ENCODE measurements at regions of chr2 and their contacts with region 1.

Region 1: GRCh38 chr2:85750587-85751575 is 2.9 kb upstream of the ATOH8 start:
- DNase-seq: peak; percentile 47
- H3K4me3 Mint-ChIP-seq: no peak overlapping the region
- H3K27ac Mint-ChIP-seq: no peak overlapping the region
- H3K4me1 Mint-ChIP-seq: peaks cover 13% of the 10 kb centered on the region
- H3K27me3 Mint-ChIP-seq: peaks cover 52% of the 10 kb centered on the region

Region 2: GRCh38 chr2:85684806-85685205 is 66.1 kb before region 1 on chr2:
- intact Hi-C with region 1: no loop called
- DNase-seq: no peak
- H3K4me3 Mint-ChIP-seq: no peak overlapping the region
- H3K27ac Mint-ChIP-seq: no peak overlapping the region
- H3K4me1 Mint-ChIP-seq: peaks cover 23% of the 10 kb centered on the region
- H3K27me3 Mint-ChIP-seq: peaks cover 10% of the 10 kb centered on the region

Region 3: DNA sequence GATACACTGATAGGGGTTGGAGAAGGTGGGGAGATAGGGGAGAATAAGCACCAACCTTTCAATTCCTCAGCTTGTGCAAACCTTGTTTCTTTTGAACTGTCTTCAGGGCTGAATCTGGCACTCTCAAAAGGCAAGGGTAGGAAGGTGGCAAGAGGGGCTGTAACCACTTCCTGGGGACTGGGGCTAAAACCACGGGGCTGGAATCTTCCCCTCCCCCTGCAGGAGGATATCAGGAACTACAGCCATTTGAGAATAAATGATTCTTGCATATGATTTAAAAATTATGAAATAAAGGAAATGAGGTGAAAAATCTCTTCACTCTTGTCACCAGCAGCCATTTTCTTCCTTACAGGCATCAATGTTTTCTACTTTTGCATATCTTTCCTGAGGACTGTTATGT is 53.7 kb after region 1 on chr2:
- intact Hi-C with region 1: loop called (anchors 1 kb)
- DNase-seq: peak; percentile 10
- H3K4me3 Mint-ChIP-seq: no peak overlapping the region
- H3K27ac Mint-ChIP-seq: no peak overlapping the region
- H3K4me1 Mint-ChIP-seq: peaks cover 13% of the 10 kb centered on the region
- H3K27me3 Mint-ChIP-seq: peaks cover 15% of the 10 kb centered on the region

Region 4: DNA sequence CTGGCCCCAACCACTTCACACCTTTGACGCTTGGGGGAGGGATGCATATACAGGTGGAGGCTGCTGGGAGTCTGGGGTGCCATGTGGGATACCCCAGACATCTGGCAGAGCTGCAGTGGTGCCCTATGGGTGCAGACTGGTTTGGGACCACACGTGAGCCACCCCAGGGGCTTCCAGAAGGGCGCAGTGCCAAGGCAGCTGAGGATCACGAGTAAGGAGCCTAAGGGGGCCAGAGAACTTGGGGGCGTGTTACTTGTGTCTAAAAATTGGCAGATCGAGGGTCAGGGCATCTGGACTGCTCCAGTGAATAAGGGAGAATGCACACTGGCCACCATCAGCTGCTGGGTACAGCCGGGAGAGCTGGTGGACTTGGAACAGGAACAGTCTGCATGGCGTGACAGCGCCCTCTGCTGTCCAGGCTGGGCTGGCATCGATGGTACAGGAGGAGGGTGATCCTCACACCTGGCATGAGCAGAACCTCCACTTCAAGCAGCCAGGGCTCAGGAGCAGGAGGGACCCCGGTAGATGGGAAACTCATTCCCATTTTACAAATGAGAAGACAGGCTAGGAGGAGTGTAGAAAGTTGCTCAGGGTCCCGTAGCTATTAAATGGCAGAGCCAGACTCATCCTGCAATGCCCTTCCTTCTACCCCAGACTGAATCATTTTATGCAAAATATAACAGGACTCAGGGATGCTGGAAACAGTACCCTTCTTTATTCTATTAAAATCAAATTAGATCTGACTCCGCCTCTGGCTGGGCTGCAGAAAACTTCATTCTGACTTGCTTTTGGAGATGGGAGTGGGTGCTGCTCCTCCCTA is 63.3 kb after region 1 on chr2:
- intact Hi-C with region 1: loop called (anchors 1 kb)
- DNase-seq: peak; percentile 74
- H3K4me3 Mint-ChIP-seq: no peak overlapping the region
- H3K27ac Mint-ChIP-seq: no peak overlapping the region
- H3K4me1 Mint-ChIP-seq: peaks cover 8% of the 10 kb centered on the region
- H3K27me3 Mint-ChIP-seq: peaks cover 35% of the 10 kb centered on the region

Region 5: DNA sequence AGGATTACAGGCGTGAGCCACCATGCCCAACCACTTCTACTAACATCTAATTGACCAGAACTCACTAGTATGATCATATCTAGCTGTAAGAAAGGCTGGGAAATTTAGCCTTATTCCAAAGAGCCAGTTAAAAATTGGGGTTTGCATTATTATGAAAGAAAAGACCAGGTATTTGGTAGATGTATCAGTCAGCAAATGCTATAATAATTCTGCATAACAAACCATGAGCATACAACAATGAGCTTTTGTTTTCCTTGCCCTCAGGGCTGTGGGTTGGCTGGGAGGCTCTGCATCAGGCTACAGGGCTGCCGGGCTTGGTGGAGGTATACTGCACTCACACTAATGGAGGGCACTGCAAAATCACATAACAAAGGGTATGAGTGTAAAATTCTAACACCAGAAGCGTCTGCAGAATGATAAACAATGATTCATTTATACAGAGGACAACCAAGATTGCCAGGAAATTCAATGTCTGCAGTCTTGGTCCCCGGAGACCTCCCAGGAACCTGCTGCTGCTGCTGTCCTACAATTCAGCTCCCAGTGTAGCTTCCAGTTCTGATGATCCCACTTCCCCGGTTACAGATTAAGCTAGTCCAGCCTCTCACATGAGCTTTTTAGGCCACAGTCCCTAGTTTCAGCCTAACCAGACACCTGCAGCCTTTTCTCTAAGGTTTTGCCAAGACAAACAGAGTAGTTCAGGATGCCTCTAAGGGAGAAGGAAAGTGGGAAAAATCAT is 170.1 kb after region 1 on chr2:
- intact Hi-C with region 1: no loop called
- DNase-seq: no peak
- H3K4me3 Mint-ChIP-seq: no peak overlapping the region
- H3K27ac Mint-ChIP-seq: no peak overlapping the region
- H3K4me1 Mint-ChIP-seq: peaks cover 17% of the 10 kb centered on the region
- H3K27me3 Mint-ChIP-seq: peaks cover 7% of the 10 kb centered on the region

Region 6: DNA sequence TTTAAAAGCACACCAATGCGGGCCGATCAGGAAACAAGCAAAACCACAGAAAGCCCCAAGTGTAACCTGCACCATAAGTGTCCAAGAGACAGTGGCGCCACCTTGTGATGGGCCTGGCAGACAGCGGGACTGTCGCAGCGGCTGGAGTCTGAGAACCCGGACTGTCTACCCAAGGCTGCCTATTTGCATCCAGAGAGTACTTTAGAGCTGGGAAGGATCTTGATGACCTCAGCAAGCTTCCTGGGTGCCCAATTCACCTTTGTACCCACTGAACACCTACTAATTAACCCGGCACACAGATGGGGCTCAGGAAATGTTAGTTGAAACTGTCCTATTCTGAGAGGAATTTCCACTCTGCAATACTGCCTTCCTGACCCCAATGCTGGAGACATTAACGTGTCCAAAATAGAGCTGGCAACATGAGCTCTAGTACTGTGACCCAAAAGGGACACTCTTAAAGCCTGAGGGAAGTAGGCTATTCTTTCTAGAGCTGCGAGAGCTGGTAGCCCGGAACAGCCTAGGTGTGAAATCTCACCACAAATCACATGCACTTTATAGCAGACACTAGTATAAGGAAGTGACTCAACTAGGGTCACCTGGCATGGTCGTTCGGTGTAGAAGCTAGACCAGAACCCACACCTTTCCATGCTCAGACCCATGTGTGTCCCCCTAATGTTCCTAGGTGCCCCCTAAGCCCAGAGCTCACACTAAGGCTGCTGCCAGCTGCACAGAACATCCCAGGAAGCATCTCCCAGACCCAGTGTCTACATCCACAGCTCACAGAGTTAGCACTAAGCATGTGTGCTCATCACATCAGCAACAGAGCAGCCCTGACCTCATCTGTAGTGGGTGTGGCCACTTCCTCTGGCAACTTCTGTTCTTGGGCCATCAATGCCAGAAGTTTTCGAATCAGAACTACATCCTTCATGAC is 329.4 kb after region 1 on chr2:
- intact Hi-C with region 1: loop called (anchors 1 kb)
- DNase-seq: peak; percentile 73
- H3K4me3 Mint-ChIP-seq: no peak overlapping the region
- H3K27ac Mint-ChIP-seq: peak overlapping the region; percentile 71
- H3K4me1 Mint-ChIP-seq: peaks cover 47% of the 10 kb centered on the region
- H3K27me3 Mint-ChIP-seq: no peaks in the 10 kb centered on the region